ENCODE measurements at regions of chr19 and their contacts with region 1.

Region 1: GRCh38 chr19:18588611-18589379 is at the start of gene REX1BD:
- DNase-seq: peak; percentile 70 to 95 (median 87)
- ATAC-seq: peak; percentile 77
- H3K4me3 ChIP-seq: peak within 1 kb of the TSS; percentile 76
- H3K4me3 Mint-ChIP-seq: peak within 1 kb of the TSS; percentile 95
- H3K27ac ChIP-seq: peak within 1 kb of the TSS; percentile 80 to 88
- H3K27ac Mint-ChIP-seq: peak within 1 kb of the TSS; percentile 95
- H3K4me1 ChIP-seq: peaks cover 48% of the 10 kb centered on the region
- H3K4me1 Mint-ChIP-seq: peaks cover 42% of the 10 kb centered on the region
- H3K27me3 ChIP-seq: no peaks in the 10 kb centered on the region
- H3K27me3 Mint-ChIP-seq: no peaks in the 10 kb centered on the region
- CTCF ChIP-seq: peak; percentile 83
- total RNA-seq, gene REX1BD: 88.4 to 88.9 TPM

Region 2: DNA sequence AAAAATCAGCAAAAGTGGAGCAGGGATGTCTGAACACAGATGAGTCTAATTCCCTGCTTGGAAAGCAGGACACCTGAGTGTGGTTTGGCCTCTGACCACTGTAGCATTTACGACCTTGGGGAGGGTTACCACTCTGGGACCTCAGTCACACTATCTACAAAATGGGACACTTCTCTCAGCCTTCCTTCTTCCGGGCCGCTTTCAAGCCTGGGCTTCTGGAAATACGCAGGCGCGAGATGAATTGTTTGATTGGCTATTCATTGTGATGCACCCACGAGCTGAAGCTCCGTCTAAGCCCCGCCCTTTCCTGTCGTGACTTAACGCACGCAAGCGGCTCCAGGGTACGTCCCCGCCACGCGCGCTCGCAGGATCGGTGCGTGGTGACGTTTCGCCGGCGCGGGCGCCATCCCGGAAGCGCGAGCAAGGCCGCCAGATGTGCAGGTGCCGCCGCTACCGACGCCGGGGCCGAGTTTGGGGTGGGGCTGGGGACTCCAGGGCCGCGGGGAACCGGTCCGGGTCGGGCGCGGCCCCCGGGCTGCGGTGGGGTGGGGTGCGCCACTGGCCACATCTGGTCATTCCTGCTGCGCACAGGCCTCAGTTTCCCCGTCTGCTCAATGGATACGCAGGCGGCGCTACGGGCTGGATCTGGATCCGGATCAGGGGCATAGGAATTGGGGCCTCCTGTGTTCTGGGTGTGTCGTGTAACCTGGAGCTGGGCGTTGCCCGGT is 31.2 kb before region 1 on chr19 and contains the start of gene KXD1:
- CTCF ChIA-PET with region 1: interaction called, 4 read pairs
- POLR2A ChIA-PET with region 1: interaction called, 48 read pairs
- intact Hi-C with region 1: no loop called
- DNase-seq: peak; percentile 93 to 100 (median 97)
- ATAC-seq: peak; percentile 99
- H3K4me3 ChIP-seq: peak within 1 kb of the TSS; percentile 99
- H3K4me3 Mint-ChIP-seq: peak within 1 kb of the TSS; percentile 94
- H3K27ac ChIP-seq: peak within 1 kb of the TSS; percentile 94 to 97
- H3K27ac Mint-ChIP-seq: peak within 1 kb of the TSS; percentile 98
- H3K4me1 ChIP-seq: peaks cover 30% of the 10 kb centered on the region
- H3K4me1 Mint-ChIP-seq: peaks cover 26% of the 10 kb centered on the region
- H3K27me3 ChIP-seq: no peaks in the 10 kb centered on the region
- H3K27me3 Mint-ChIP-seq: no peaks in the 10 kb centered on the region
- CTCF ChIP-seq: no peak
- total RNA-seq, gene KXD1: 64.2 to 66.9 TPM

Region 3: GRCh38 chr19:18636183-18636968 is 47.6 kb after region 1 on chr19:
- CTCF ChIA-PET with region 1: interaction called, 4 read pairs
- POLR2A ChIA-PET with region 1: interaction called, 10 read pairs
- intact Hi-C with region 1: loop called in 1 of 2 experiments (anchors 2 kb)
- DNase-seq: peak; percentile 98 to 100 (median 99)
- ATAC-seq: peak; percentile 86
- H3K4me3 ChIP-seq: peak overlapping the region; percentile 81
- H3K4me3 Mint-ChIP-seq: peak overlapping the region; percentile 91
- H3K27ac ChIP-seq: peak overlapping the region; percentile 39 to 72
- H3K27ac Mint-ChIP-seq: peak overlapping the region; percentile 83
- H3K4me1 ChIP-seq: peaks cover 34% of the 10 kb centered on the region
- H3K4me1 Mint-ChIP-seq: peaks cover 35% of the 10 kb centered on the region
- H3K27me3 ChIP-seq: no peaks in the 10 kb centered on the region
- H3K27me3 Mint-ChIP-seq: no peaks in the 10 kb centered on the region
- CTCF ChIP-seq: no peak

Region 4: DNA sequence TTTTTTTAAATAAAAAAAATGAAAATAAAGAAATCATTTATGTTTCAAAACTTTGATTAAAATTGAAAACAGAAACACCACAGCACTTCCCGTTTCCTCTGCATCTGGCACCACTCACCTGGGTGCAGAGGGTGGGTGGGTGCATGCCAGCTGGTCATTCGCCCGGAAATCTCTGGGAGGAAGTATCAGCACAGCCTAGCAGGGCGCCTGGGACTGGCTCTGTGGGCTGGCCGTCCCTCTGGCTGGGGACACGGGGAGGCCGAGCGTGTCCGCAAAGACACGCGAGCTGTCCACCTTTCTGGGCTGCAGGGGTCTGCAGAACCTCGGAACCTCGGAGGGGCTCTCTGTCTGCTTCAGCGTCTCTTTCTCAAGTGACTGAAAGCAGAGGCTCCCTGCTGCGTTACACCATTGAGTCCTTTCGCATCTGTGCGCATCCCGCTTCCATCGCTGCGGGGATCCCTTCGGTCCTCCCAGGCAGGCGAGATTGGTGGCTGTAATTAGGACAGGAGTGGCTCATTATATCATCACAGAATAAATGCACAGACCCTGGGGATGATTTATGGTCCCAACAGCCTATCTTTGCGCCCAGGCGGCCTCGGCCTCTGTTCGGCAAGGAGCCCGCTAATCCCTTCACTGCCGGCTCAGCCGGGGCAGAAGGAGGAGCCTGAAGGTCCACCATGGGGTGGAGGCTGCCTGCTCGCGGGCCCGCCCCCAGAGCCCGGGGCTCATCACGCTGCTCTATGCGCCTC is 111.9 kb after region 1 on chr19:
- CTCF ChIA-PET with region 1: no interaction called
- POLR2A ChIA-PET with region 1: interaction called, 13 read pairs
- intact Hi-C with region 1: no loop called
- DNase-seq: peak; percentile 59 to 81 (median 70)
- ATAC-seq: peak; percentile 97
- H3K4me3 ChIP-seq: peak overlapping the region; percentile 66
- H3K4me3 Mint-ChIP-seq: peak overlapping the region; percentile 91
- H3K27ac ChIP-seq: peak overlapping the region; percentile 59 to 87
- H3K27ac Mint-ChIP-seq: peak overlapping the region; percentile 88
- H3K4me1 ChIP-seq: peaks cover 43% of the 10 kb centered on the region
- H3K4me1 Mint-ChIP-seq: peaks cover 42% of the 10 kb centered on the region
- H3K27me3 ChIP-seq: no peaks in the 10 kb centered on the region
- H3K27me3 Mint-ChIP-seq: no peaks in the 10 kb centered on the region
- CTCF ChIP-seq: no peak

Region 5: GRCh38 chr19:18865973-18866799 is 277.4 kb after region 1 on chr19:
- CTCF ChIA-PET with region 1: no interaction called
- POLR2A ChIA-PET with region 1: no interaction called
- intact Hi-C with region 1: loop called in 1 of 2 experiments (anchors 5 kb)
- DNase-seq: peak in 13 of 14 experiments; percentile 41 to 83 (median 56)
- ATAC-seq: peak; percentile 83
- H3K4me3 ChIP-seq: no peak overlapping the region
- H3K4me3 Mint-ChIP-seq: no peak overlapping the region
- H3K27ac ChIP-seq: no peak overlapping the region
- H3K27ac Mint-ChIP-seq: no peak overlapping the region
- H3K4me1 ChIP-seq: peaks cover 17% of the 10 kb centered on the region
- H3K4me1 Mint-ChIP-seq: peaks cover 9% of the 10 kb centered on the region
- H3K27me3 ChIP-seq: peaks cover 5 to 7% of the 10 kb centered on the region in 2 experiments
- H3K27me3 Mint-ChIP-seq: peaks cover 5% of the 10 kb centered on the region
- CTCF ChIP-seq: peak; percentile 94